ENCODE measurements at regions of chr9 and their contacts with region 1.

Region 1: GRCh38 chr9:89529243-89530035 is 31.5 kb upstream of the SEMA4D start:
- DNase-seq: peak in 12 of 35 experiments; percentile 15 to 54 (median 28)
- ATAC-seq: peak; percentile 63 to 92 (median 79)
- H3K4me3 ChIP-seq: no peak overlapping the region
- H3K4me3 Mint-ChIP-seq: peak overlapping the region; percentile 28 to 78 (median 31)
- H3K27ac ChIP-seq: peak overlapping the region; percentile 52
- H3K27ac Mint-ChIP-seq: peak overlapping the region; percentile 92
- H3K4me1 ChIP-seq: peaks cover 62 to 92% of the 10 kb centered on the region in 2 experiments
- H3K4me1 Mint-ChIP-seq: peaks cover 99 to 100% (median 99%) of the 10 kb centered on the region in 3 donors
- H3K27me3 ChIP-seq: no peaks in the 10 kb centered on the region
- H3K27me3 Mint-ChIP-seq: no peaks in the 10 kb centered on the region

Region 2: DNA sequence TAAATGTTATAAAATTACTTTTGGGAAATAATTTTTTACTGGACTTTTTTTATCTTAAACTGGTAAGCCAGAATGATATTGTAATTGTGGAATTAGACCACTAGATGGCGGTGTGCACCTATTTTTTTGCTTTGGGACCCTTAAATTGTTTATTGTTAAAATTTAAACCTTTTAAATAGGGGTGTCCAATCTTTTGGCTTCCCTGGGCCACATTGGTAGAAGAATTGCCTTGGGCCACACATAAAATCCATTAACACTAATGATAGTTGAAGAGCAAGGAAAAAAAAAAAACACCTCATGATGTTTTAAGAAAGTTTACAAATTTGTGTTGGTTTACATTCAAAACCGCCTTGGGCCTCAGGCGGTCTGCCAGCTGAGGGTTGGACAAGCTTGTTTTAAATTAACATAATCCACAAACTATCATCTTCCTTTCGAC is 47.0 kb after region 1 on chr9:
- CTCF ChIA-PET with region 1: no interaction called
- POLR2A ChIA-PET with region 1: no interaction called
- DNase-seq: peak in 3 of 35 experiments; percentile 24 to 71 (median 25)
- ATAC-seq: peak in 1 of 4 experiments; percentile 17
- H3K4me3 ChIP-seq: no peak overlapping the region
- H3K4me3 Mint-ChIP-seq: no peak overlapping the region
- H3K27ac ChIP-seq: no peak overlapping the region
- H3K27ac Mint-ChIP-seq: no peak overlapping the region
- H3K4me1 ChIP-seq: peaks cover 4 to 8% of the 10 kb centered on the region in 2 experiments
- H3K4me1 Mint-ChIP-seq: peaks cover 12 to 18% (median 15%) of the 10 kb centered on the region in 3 donors
- H3K27me3 ChIP-seq: peaks cover 0 to 23% of the 10 kb centered on the region in 2 experiments
- H3K27me3 Mint-ChIP-seq: peaks cover 34 to 46% of the 10 kb centered on the region in 2 donors

Region 3: DNA sequence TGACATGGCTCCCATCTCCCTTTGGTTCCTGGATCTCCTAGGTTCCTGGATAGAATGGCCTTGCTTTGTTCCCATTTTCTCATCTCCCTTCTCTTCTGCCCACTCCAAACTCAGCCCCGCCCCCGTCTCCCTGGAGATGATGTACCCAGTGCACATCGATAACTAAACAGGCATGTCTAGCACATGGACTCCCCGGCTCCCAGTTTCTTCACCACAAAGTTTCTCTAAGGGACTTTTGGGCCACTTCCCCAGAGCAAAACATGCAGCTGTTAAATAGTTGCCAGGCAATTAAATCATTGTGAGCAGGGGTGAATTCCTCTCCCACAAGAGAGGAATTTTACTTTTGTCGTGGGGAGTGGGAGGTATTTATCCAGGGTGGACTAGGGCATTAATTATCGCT is 334.4 kb after region 1 on chr9:
- CTCF ChIA-PET with region 1: no interaction called
- POLR2A ChIA-PET with region 1: no interaction called
- DNase-seq: no peak
- ATAC-seq: no peak
- H3K4me3 ChIP-seq: no peak overlapping the region
- H3K4me3 Mint-ChIP-seq: no peak overlapping the region
- H3K27ac ChIP-seq: no peak overlapping the region
- H3K27ac Mint-ChIP-seq: no peak overlapping the region
- H3K4me1 ChIP-seq: no peaks in the 10 kb centered on the region
- H3K4me1 Mint-ChIP-seq: no peaks in the 10 kb centered on the region
- H3K27me3 ChIP-seq: peaks cover 0 to 3% of the 10 kb centered on the region in 2 experiments
- H3K27me3 Mint-ChIP-seq: peaks cover 0 to 9% of the 10 kb centered on the region in 2 donors

Region 4: DNA sequence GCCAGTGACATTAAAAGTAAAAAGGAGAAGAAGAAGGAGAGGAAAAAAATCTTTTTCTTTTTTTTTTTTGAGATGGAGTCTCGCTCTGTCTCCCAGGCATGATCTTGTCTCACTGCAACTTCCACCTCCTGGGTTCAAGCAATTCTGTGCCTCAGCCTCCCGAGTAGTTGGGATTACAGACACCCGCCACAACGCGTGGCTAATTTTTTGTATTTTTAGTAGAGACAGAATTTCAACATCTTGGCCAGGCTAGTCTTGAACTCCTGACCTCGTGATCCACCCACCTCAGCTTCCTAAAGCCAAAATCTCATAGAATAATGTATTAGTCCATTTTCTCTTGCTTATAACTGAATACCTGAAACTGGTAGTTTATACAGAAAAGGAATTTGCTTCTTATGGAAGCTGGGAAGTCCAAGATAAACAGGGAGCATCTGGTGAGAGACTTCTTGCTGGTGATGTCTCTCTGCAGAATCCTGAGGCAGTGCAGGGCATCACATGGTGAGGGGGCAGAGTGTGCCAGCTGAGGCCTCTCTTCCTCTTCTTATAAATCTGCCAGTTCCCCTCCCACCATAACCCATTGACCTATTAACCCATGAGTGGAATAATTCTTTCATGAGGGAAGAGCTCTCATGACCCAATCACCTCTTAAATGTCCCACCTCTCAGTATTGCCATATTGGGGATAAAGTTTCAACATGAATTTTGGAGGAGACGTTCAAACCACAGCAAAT is 541.7 kb after region 1 on chr9:
- CTCF ChIA-PET with region 1: interaction called in 1 of 2 experiments, 12 read pairs
- POLR2A ChIA-PET with region 1: no interaction called
- DNase-seq: no peak
- ATAC-seq: no peak
- H3K4me3 ChIP-seq: no peak overlapping the region
- H3K4me3 Mint-ChIP-seq: no peak overlapping the region
- H3K27ac ChIP-seq: no peak overlapping the region
- H3K27ac Mint-ChIP-seq: no peak overlapping the region
- H3K4me1 ChIP-seq: no peaks in the 10 kb centered on the region
- H3K4me1 Mint-ChIP-seq: no peaks in the 10 kb centered on the region
- H3K27me3 ChIP-seq: peaks cover 0 to 8% of the 10 kb centered on the region in 2 experiments
- H3K27me3 Mint-ChIP-seq: peaks cover 33% of the 10 kb centered on the region in 2 donors

Measured in T-cell (primary cell).